Heart left ventricle (tissue), 16 donors: ENCODE measurements at regions of chr22 and their contacts with region 1.

Region 1: GRCh38 chr22:22848364-22848866 is 39.2 kb upstream of the IGLL5 start:
- DNase-seq: peak; percentile 43 to 75 (median 53)
- ATAC-seq: peak in 3 of 4 donors; percentile 47 to 81 (median 72)
- H3K4me3 ChIP-seq: no peak overlapping the region
- H3K27ac ChIP-seq: no peak overlapping the region
- H3K4me1 ChIP-seq: peaks cover 0 to 7% (median 0%) of the 10 kb centered on the region in 12 donors
- H3K27me3 ChIP-seq: peaks cover 0 to 35% (median 0%) of the 10 kb centered on the region in 9 donors
- CTCF ChIP-seq: peak; percentile 69 to 95 (median 86)
- POLR2A ChIP-seq: peak in 1 of 2 donors; percentile 26

Region 2: GRCh38 chr22:22450343-22450839 is 398.0 kb before region 1 on chr22:
- intact Hi-C with region 1: no loop called
- DNase-seq: peak in 2 of 5 donors; percentile 11 to 34
- ATAC-seq: peak in 3 of 4 donors; percentile 26 to 61 (median 41)
- H3K4me3 ChIP-seq: no peak overlapping the region
- H3K27ac ChIP-seq: no peak overlapping the region
- H3K4me1 ChIP-seq: no peaks in the 10 kb centered on the region
- H3K27me3 ChIP-seq: peaks cover 0 to 30% (median 7%) of the 10 kb centered on the region in 9 donors
- CTCF ChIP-seq: no peak
- POLR2A ChIP-seq: no peak

Region 3: GRCh38 chr22:22877523-22878210 is 29.3 kb after region 1 on chr22:
- intact Hi-C with region 1: loop called in 3 of 10 experiments (anchors 2 to 5 kb)
- DNase-seq: peak in 4 of 5 donors; percentile 50 to 78 (median 57)
- ATAC-seq: peak in 2 of 4 donors; percentile 52 to 59
- H3K4me3 ChIP-seq: no peak overlapping the region
- H3K27ac ChIP-seq: no peak overlapping the region
- H3K4me1 ChIP-seq: no peaks in the 10 kb centered on the region
- H3K27me3 ChIP-seq: peaks cover 0 to 6% (median 0%) of the 10 kb centered on the region in 9 donors
- CTCF ChIP-seq: peak; percentile 45 to 84 (median 67)
- POLR2A ChIP-seq: no peak

Region 4: DNA sequence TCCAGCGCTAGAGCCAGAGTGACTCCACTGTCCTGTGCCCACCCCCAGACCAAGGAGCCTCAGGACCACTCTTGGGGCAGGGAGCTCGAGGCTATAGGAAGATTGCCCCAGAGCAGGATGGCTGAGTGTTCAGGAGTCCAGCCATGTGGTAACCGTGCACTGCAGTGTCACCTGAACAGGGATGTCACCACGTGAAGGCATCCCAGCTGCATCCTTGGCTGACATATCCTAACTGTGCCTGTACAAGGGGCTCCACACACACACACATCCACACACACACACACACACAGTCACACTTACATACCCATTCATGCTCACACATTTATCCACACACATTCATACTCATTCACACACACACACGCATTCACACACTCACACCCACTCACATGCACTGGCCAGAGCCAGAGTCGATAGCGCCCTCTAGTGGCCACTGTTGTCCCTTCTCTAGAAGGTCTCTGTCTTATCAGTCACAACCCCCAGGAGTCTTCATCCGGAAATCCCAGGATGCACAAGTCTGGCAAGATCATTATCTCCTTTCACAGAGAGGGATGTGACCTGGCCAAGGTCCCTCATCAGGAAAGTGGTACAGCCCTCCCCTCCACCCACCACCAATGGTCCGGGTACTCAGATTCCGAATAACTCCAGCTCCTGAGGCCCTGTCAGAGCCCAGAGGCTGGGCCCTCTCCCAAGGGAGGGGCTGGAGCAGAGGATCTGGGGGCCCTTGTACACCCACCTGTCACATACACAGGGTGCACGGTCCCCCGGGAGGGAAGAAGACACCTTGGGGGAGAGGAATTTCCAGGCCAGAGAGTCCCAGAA is 94.3 kb after region 1 on chr22:
- intact Hi-C with region 1: loop called in 3 of 10 experiments (anchors 5 kb)
- DNase-seq: peak; percentile 47 to 68 (median 54)
- ATAC-seq: peak in 3 of 4 donors; percentile 51 to 67 (median 54)
- H3K4me3 ChIP-seq: no peak overlapping the region
- H3K27ac ChIP-seq: no peak overlapping the region
- H3K4me1 ChIP-seq: peaks cover 0 to 5% (median 0%) of the 10 kb centered on the region in 12 donors
- H3K27me3 ChIP-seq: peaks cover 0 to 11% (median 0%) of the 10 kb centered on the region in 9 donors
- CTCF ChIP-seq: peak; percentile 52 to 72 (median 62)
- POLR2A ChIP-seq: no peak

Region 5: DNA sequence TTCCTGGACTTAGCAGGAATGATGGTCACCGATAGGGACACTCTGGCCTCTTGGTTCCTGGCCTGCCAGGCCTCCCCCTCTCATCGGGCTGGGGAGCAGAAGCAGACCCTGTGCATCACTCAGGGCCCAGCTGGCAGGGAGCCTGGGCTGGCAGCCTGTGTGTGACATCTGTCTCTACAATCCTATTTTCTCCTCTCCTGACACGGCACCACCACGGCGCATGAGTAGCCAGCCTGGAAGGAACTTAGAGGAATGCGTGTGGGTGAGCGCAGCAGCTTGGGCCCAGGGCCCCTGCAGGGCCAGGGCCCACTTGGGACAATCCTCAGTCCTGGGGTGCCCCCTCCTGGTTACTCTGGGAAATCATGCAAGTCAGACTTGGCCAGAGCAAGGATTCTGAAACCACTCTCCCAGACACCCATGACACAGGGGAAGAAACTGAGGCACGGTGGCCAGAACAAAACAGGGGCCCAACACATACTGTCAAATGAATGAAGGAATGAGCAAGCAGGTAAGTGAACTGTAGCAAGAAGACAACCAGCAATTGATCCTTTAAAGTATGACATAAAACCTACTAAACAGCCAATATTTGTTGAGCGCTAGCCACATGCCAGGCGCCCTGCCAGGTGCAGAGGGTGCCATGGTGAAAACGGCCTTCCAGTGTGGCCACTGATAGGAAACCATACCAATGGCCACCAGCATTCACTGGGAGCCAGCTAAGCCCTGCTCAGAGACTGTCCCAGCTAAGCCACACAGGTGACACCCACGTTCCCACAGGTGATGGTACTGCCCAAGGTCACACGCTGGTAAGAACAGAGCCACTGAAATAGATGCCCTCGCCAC is 280.1 kb after region 1 on chr22:
- intact Hi-C with region 1: loop called in 2 of 10 experiments (anchors 5 to 10 kb)
- DNase-seq: peak; percentile 70 to 76 (median 72)
- ATAC-seq: peak; percentile 71 to 95 (median 88)
- H3K4me3 ChIP-seq: no peak overlapping the region
- H3K27ac ChIP-seq: no peak overlapping the region
- H3K4me1 ChIP-seq: peaks cover 0 to 10% (median 3%) of the 10 kb centered on the region in 12 donors
- H3K27me3 ChIP-seq: no peaks in the 10 kb centered on the region
- CTCF ChIP-seq: peak; percentile 67 to 91 (median 80)
- POLR2A ChIP-seq: no peak